ENCODE measurements at regions of chr19 and their contacts with region 1.

Region 1: DNA sequence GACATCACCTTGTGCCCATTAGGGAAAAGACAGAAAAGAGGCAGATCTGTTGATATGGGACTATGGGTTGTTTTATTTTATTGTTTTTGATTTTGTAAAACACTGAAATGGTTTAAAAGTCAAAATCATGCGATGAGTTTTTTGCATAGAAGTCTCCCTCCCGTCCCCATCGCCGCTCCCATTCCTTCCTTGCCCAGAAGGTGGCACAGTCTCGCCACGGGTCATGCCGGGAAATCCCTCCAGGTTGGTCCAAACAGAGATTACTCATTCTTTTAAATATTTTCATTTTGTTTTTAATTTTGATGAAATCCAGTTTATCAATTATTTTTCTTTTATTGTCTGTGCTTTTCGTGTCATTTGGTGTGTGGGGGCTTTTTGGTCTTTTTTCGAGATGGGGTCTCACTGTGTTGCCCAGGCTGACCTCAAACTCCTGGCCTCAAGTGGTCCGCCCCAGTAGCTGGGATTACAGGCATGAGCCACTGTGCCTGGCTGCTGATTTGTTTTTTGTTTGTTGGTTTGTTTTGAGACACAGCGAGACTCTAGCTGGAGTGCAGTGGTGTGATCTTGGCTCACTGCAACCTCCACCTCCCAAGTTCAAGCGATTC is 9.2 kb downstream of the PGPEP1 start:
- DNase-seq: peak; percentile 84
- H3K4me3 ChIP-seq: no peak overlapping the region
- H3K27ac ChIP-seq: no peak overlapping the region
- H3K4me1 ChIP-seq: no peaks in the 10 kb centered on the region
- H3K27me3 ChIP-seq: no peaks in the 10 kb centered on the region
- CTCF ChIP-seq: peak; percentile 96
- EP300 ChIP-seq: no peak
- RAD21 ChIP-seq: peak; percentile 95

Region 2: DNA sequence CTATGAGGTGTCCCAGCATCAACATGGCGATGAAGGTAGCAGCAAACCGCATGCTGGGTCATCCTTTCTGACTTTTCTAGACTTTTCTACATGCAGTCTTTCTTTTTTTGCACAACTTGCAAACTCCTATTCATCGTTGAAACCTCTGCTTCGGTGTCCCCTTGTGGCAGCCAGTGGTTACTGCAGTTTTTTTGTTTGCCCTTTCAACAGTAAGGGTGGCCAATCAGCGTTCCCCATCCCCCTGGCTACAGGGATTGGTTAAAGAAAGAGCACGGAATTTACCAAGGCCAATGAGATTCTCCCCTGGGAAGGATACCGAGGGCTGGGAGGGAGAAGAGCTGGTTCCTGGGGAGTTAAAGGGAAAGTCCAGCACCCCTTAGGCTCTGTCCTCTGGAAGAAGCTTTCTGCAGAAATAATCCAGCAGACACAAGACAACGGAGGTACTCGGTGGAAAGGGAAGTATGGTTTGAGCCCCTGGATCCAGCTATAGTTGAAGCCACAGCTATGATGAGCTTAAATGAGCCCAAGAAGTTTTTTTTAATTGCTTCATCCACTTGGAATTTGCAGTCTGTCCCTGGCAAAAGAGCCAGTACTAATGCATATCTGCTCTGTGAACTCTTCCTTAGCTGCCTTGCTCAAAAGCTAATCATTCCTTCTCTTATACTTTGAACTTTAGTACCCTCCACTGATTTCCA is 21.1 kb before region 1 on chr19:
- CTCF ChIA-PET with region 1: interaction called, 11 read pairs
- POLR2A ChIA-PET with region 1: no interaction called
- DNase-seq: peak; percentile 94
- H3K4me3 ChIP-seq: peak overlapping the region; percentile 39 to 52
- H3K27ac ChIP-seq: peak overlapping the region; percentile 63 to 84
- H3K4me1 ChIP-seq: peaks cover 10 to 14% of the 10 kb centered on the region in 2 experiments; a peak in 2 of 4 replicates
- H3K27me3 ChIP-seq: no peaks in the 10 kb centered on the region
- CTCF ChIP-seq: peak; percentile 93
- EP300 ChIP-seq: peak in 1 of 2 experiments; percentile 53; a peak in 2 of 4 replicates
- RAD21 ChIP-seq: peak; percentile 90

Region 3: GRCh38 chr19:18364826-18365528 is 15.4 kb after region 1 on chr19:
- CTCF ChIA-PET with region 1: interaction called, 66 read pairs
- POLR2A ChIA-PET with region 1: interaction called, 5 read pairs
- DNase-seq: peak; percentile 86
- H3K4me3 ChIP-seq: no peak overlapping the region
- H3K27ac ChIP-seq: peak overlapping the region; percentile 96 to 98
- H3K4me1 ChIP-seq: peaks cover 20 to 23% of the 10 kb centered on the region in 2 experiments; a peak in 3 of 4 replicates
- H3K27me3 ChIP-seq: no peaks in the 10 kb centered on the region
- CTCF ChIP-seq: no peak
- EP300 ChIP-seq: peak; percentile 84 to 91; a peak in 3 of 4 replicates
- RAD21 ChIP-seq: no peak

Region 4: GRCh38 chr19:18379803-18380747 is 30.4 kb after region 1 on chr19:
- CTCF ChIA-PET with region 1: interaction called, 83 read pairs
- POLR2A ChIA-PET with region 1: no interaction called
- DNase-seq: no peak
- H3K4me3 ChIP-seq: no peak overlapping the region
- H3K27ac ChIP-seq: no peak overlapping the region
- H3K4me1 ChIP-seq: peaks cover 0 to 8% of the 10 kb centered on the region in 2 experiments; a peak in 2 of 4 replicates
- H3K27me3 ChIP-seq: no peaks in the 10 kb centered on the region
- CTCF ChIP-seq: no peak
- EP300 ChIP-seq: no peak
- RAD21 ChIP-seq: no peak

Region 5: DNA sequence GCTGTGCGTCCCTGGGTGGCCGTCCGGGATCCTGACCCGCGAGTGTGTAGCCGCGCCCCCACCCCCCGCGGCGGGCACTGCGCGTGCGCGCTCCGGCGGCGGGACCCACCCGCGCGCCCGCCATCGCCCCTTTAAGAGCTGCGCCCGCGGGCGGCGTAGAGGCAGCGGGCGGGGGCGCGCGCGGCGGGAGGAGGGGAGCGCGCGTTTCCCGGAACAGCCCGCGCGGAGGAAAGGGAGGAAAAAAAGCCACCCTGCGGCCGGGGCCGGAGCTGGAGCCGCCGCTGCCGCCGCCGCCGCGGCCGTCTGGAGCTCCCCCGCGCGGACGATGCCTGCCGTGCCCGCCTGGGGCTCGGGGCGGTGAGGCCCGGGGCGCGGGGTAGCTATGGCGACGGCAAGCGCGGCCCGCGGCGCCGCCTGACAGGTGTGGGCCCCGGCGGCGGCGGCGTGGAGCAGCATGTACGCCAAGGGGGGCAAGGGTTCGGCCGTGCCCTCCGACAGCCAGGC is 69.6 kb after region 1 on chr19 and contains the start of gene SSBP4:
- CTCF ChIA-PET with region 1: interaction called, 217 read pairs
- POLR2A ChIA-PET with region 1: no interaction called
- DNase-seq: peak; percentile 97
- H3K4me3 ChIP-seq: peak within 1 kb of the TSS; percentile 68 to 74
- H3K27ac ChIP-seq: peak within 1 kb of the TSS; percentile 89 to 93; a peak in 3 of 4 replicates
- H3K4me1 ChIP-seq: peaks cover 41 to 53% of the 10 kb centered on the region in 2 experiments; a peak in 3 of 4 replicates
- H3K27me3 ChIP-seq: no peaks in the 10 kb centered on the region
- CTCF ChIP-seq: peak; percentile 12; the same call in 1 of the 2 replicates
- EP300 ChIP-seq: peak; percentile 59 to 65; a peak in 2 of 4 replicates
- RAD21 ChIP-seq: no peak
- polyA plus RNA-seq, gene SSBP4: 22.5 and 24.9 TPM in 2 replicates

Measured in SK-N-SH (cell line).